Prostate gland (tissue), 2 donors: ENCODE measurements at regions of chr17 and their contacts with region 1.

Region 1: GRCh38 chr17:43846221-43846712 is 709 bp upstream of the CD300LG start:
- DNase-seq: peak; percentile 62
- H3K4me3 ChIP-seq: no peak overlapping the region
- H3K27ac ChIP-seq: no peak overlapping the region
- H3K4me1 ChIP-seq: no peaks in the 10 kb centered on the region
- H3K27me3 ChIP-seq: no peaks in the 10 kb centered on the region
- CTCF ChIP-seq: peak; percentile 74 to 96 (median 86)
- POLR2A ChIP-seq: no peak

Region 2: GRCh38 chr17:43694077-43694870 is 152.0 kb before region 1 on chr17:
- intact Hi-C with region 1: loop called (anchors 5 kb)
- DNase-seq: peak; percentile 74
- H3K4me3 ChIP-seq: no peak overlapping the region
- H3K27ac ChIP-seq: no peak overlapping the region
- H3K4me1 ChIP-seq: no peaks in the 10 kb centered on the region
- H3K27me3 ChIP-seq: no peaks in the 10 kb centered on the region
- CTCF ChIP-seq: peak; percentile 83 to 96 (median 90)
- POLR2A ChIP-seq: no peak

Region 3: DNA sequence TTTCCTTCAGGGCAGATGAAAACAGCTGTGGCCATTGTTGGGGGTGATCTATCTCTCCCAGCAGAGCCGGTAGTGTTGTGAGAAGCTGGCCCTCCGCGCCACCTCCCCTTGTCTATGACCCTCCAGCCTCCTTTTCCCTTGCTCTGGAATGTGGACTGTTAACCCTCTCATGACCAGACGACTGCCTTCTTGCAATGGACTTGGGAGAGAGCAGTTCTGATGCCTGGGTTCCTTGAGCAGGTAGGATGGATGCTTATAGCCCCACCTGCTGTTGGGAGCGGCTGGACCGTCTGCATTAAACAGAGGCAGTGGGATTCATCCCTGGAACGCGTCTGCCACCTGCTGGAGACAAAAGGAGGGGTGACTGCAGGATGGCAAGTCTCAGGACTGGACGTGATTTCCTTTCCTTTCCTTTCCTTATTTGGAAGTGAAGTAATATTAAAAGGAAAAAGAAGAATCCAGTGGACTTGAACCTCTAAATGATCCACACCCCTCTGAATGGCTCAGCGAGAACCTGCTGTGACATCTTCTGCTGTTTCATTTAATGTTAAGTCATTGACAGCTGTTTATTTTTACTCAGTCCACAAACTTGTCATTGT is 85.9 kb before region 1 on chr17:
- intact Hi-C with region 1: loop called (anchors 5 kb)
- DNase-seq: peak; percentile 95
- H3K4me3 ChIP-seq: no peak overlapping the region
- H3K27ac ChIP-seq: no peak overlapping the region
- H3K4me1 ChIP-seq: no peaks in the 10 kb centered on the region
- H3K27me3 ChIP-seq: peaks cover 3% of the 10 kb centered on the region
- CTCF ChIP-seq: peak; percentile 97 to 99 (median 98)
- POLR2A ChIP-seq: no peak

Region 4: DNA sequence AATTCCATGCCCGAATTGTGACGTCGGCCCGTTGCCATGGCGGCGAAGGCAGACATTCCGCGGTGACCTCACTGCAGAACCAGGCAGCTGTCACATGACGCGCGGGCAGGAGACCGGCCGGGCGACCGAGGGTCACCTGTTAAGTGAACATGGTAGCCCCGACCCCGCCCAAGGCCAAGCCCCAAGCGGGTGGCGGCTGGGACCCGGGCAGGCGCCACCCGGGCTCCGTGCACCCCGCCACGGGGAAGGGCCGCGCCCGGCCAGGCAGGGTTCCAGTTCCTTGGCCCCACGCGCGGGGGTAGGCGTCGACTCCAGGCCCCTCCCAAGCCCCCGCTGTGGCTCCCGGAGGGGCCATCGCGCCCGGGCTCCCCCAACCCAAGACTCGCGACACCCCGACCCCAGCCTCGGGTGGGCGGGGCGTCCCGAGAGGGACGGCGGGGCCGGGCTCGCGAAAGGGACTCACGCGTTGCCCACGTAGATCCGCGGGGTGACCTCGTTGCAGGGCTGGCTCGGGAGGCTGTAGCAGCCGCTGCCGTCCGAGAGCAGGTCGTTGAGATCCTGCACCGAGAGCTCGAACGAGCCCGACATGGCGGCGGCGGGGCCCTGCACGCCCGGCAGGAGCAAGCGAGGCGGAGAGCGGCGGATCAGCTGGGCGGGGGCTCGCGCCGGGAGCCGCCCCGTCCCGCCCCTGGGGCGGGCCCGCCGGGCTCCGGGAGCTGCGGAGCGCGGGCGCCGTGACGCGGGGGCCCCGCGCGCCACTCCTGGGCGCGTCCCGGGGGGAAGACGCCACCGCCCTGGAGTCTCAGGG is 67.7 kb before region 1 on chr17 and contains the start of gene DUSP3:
- intact Hi-C with region 1: loop called (anchors 5 kb)
- DNase-seq: peak; percentile 94
- H3K4me3 ChIP-seq: peak within 1 kb of the TSS; percentile 98 to 100
- H3K27ac ChIP-seq: peak within 1 kb of the TSS; percentile 100
- H3K4me1 ChIP-seq: peaks cover 6% of the 10 kb centered on the region
- H3K27me3 ChIP-seq: no peaks in the 10 kb centered on the region
- CTCF ChIP-seq: peak in 1 of 4 experiments; percentile 10
- POLR2A ChIP-seq: peak; percentile 91
- total RNA-seq, gene DUSP3: 62.4 to 78.9 TPM

Region 5: DNA sequence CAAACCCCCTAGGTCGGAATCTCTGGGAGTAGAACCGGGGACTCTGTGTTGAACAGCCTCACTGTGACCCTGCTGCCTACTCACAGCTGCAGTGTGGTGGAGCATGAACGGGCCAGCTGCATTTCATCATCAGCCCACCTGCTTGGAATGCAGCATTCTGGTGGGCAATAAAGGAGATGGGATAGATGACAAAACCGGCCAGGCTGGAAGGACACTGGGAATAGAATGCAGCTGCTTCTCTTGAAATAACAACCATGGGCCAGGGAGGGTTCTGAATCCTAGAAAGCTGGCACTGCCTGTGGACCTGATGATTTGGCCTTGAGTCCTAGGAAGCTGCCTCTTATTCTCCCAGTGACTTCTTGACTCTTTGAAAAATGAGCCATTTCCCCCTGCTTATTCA is 42.5 kb before region 1 on chr17:
- intact Hi-C with region 1: no loop called
- DNase-seq: no peak
- H3K4me3 ChIP-seq: no peak overlapping the region
- H3K27ac ChIP-seq: no peak overlapping the region
- H3K4me1 ChIP-seq: no peaks in the 10 kb centered on the region
- H3K27me3 ChIP-seq: no peaks in the 10 kb centered on the region
- CTCF ChIP-seq: no peak
- POLR2A ChIP-seq: no peak

Region 6: DNA sequence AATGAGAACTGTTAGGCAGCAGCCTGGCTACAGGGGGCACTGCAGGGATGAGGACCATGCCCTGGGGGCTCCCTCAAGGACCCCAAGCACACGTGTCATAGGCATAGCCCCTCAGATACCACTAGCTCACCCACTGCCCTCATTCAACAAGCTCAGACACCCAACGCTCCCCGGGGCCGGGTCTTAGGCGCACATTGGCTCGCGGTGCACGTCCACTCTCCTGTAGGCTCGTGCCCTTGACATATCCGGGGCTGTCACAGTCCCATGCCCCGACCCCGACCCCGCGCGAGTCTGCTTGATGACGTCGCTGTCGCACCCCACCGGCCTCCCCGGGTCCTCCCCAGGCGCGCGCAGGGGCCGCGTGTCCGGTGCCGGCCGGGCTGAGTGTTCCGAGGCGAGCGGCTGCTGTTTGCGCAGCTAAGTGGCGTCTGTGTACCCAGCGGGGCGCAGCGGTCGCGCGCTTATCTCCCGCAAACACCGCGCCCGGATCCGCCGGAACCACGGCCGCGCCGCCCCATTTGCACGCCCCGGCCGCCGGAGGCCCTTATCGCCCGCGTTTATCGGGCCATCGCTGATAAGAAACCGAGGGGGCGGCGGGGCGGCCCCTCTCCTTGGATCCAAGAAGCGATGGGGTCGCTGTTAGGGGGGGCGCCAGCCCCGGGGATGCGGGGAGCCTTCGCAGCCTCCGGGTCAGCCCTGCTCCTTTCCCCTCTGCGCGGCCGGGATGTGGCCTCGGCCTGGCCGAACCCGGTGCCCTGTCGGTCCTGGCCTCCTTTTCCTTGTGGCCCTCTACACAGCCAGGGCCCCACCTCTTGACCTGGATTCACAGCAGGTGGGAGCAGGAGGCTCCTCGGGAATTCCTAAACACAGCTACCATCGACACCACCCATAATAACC is 137.5 kb after region 1 on chr17:
- intact Hi-C with region 1: no loop called
- DNase-seq: no peak
- H3K4me3 ChIP-seq: peak overlapping the region; percentile 13 to 32
- H3K27ac ChIP-seq: no peak overlapping the region
- H3K4me1 ChIP-seq: no peaks in the 10 kb centered on the region
- H3K27me3 ChIP-seq: no peaks in the 10 kb centered on the region
- CTCF ChIP-seq: no peak
- POLR2A ChIP-seq: no peak